Colonic mucosa (tissue), 4 donors: ENCODE measurements at regions of chr2 and their contacts with region 1.

Region 1: DNA sequence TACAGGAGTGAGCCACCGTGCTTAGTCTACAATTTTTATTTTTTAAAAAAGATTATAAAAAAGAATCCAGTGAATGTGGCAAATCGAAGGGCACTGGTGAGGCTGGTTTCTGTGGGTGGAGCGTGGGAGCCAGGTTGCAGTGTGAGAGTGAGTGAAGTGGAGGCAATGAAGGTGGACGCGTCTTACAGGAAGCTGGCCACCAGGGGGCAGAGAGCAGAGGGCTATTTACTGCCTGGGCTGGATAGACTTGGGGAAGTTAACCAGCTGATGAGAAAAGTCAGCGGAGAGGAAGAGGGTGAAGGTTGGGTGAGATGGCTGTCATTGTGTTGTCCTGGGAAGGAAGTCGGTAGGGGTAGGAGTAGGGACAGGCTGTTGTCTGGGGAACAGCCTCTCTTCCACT is 6.8 kb downstream of the SCTR start:
- DNase-seq: peak; percentile 75
- H3K4me3 ChIP-seq: no peak overlapping the region
- H3K27ac ChIP-seq: no peak overlapping the region
- H3K4me1 ChIP-seq: no peaks in the 10 kb centered on the region
- H3K27me3 ChIP-seq: peaks cover under 1% of the 10 kb centered on the region
- CTCF ChIP-seq: peak; percentile 64

Region 2: GRCh38 chr2:119659601-119660342 is 142.3 kb after region 1 on chr2:
- intact Hi-C with region 1: loop called (anchors 5 kb)
- DNase-seq: peak; percentile 52
- H3K4me3 ChIP-seq: no peak overlapping the region
- H3K27ac ChIP-seq: no peak overlapping the region
- H3K4me1 ChIP-seq: no peaks in the 10 kb centered on the region
- H3K27me3 ChIP-seq: no peaks in the 10 kb centered on the region
- CTCF ChIP-seq: peak; percentile 77